ENCODE measurements at regions of chr1 and their contacts with region 1.

Region 1: GRCh38 chr1:50978144-50978851 is 8.3 kb downstream of the CDKN2C start:
- DNase-seq: peak; percentile 61

Region 2: GRCh38 chr1:50959913-50960844 is 18.1 kb before region 1 on chr1 and contains the start of gene FAF1:
- CTCF ChIA-PET with region 1: no interaction called
- POLR2A ChIA-PET with region 1: interaction called, 97 read pairs
- DNase-seq: peak; percentile 91

Region 3: DNA sequence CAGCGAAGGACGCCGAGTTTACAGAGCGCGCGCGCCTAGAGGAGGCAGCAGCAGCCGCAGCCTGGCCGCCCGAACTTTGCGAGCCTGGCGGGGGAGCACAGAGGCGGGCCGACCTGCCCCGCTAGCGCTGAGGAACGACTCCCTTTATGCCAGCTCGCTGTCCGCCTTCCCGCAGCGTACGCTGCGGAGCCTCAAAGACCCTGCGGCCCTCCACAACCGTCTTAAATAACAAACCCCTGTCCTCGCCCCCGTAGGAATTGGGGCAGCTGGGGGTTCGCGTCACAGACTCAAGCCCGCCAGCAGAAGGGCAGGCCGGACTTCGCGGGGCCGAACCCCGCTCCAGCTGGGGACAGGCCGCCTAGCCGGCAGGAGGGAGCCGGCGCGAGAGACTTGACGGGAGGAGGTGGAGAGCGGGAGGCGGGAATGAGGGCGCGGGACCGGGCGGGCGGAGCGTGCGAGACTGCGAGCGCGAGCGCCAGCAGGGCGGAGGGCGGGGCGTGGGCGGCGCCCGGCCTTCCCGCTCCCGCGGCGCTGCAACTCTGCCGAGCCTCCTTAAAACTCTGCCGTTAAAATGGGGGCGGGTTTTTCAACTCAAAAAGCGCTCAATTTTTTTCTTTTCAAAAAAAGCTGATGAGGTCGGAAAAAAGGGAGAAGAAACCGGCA is 10.0 kb before region 1 on chr1:
- CTCF ChIA-PET with region 1: no interaction called
- POLR2A ChIA-PET with region 1: interaction called, 58 read pairs
- DNase-seq: peak; percentile 83

Measured in HEK293T (cell line).